T-cell (primary cell): ENCODE measurements at regions of chr1 and their contacts with region 1.

Region 1: DNA sequence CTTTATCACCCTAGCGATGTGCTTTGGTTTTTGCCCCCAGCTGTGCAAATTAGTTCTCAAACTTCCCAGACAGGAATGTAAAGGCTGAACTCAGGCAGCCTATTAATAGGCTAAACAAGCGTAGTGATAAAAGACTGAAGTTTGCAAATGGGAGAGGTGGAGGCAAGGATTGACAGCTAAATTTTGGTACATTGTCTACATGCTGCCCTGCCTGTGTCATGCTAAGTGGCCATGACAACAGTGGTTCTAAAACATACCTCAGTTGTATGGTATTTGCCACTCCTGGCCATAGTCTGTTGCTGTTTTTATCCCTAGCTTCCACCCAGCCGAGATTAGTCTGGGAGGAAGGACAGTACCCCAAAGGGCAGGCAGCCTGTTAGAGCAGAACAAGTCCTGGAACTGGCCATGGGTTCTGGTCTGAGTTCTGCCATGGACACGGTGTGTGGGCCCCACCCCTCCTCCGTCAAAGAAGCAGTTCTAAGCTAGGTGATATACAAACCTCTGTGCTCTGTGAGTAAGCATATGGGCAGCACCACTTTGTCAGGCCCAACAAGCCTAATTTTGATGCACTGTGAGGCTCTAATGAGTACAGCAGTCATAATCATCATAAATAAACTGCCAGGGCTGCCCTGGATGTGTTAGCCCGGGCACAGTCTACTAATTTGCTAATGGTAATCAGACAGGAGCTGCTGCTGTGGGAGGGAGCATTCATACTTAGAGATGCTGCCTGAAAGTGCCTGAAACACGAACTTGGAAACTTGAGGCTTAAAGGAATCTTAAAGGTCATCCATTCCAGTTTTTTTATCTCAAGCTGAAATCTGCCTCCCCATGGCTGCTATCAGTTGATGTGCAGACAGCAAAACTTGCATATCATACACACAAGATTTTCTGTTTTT is 177.1 kb downstream of the HHAT start:
- DNase-seq: no peak
- ATAC-seq: no peak
- H3K4me3 ChIP-seq: no peak overlapping the region
- H3K4me3 Mint-ChIP-seq: no peak overlapping the region
- H3K27ac ChIP-seq: no peak overlapping the region
- H3K27ac Mint-ChIP-seq: no peak overlapping the region
- H3K4me1 ChIP-seq: no peaks in the 10 kb centered on the region
- H3K4me1 Mint-ChIP-seq: no peaks in the 10 kb centered on the region
- H3K27me3 ChIP-seq: no peaks in the 10 kb centered on the region
- H3K27me3 Mint-ChIP-seq: no peaks in the 10 kb centered on the region

Region 2: DNA sequence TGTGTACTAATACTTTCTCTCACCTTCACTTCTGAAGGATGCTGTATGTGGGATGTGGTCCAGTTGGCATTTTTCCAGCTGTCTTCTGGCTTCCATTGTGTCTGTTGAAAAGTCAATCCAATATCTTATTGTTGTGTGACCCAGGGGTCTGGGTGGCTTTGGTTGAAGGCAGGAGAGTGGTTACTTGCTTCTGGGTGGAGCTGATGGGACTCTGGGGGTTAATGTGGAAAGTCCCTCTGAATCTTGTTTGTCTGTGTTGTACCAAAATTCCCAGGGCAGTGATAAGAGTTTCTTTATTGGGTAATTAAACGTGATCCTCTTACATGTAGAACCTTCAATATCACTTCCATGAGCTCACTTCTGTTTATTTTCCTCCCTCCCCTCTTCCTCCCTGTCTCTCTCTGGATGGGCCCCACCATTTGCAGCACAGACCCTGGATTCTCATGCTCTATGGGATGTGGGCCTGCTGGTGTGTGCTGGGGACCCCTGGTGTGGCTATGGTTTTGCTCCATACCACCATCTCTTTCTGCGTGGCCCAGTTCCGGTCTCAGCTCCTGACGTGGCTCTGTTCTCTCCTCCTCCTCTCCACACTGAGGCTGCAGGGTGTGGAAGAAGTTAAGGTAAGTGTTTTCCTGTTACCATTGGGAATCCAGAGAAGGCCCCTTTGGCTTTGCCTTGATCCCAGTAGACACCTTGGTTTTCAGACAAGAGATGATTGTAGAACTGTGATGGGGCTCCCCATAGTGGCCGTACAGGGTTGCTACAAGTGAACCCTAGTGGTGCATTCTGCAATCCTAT is 105.6 kb before region 1 on chr1:
- CTCF ChIA-PET with region 1: no interaction called
- POLR2A ChIA-PET with region 1: no interaction called
- DNase-seq: peak in 22 of 35 experiments; percentile 5 to 57 (median 21)
- ATAC-seq: peak; percentile 63 to 76 (median 69)
- H3K4me3 ChIP-seq: no peak overlapping the region
- H3K4me3 Mint-ChIP-seq: no peak overlapping the region
- H3K27ac ChIP-seq: no peak overlapping the region
- H3K27ac Mint-ChIP-seq: peak overlapping the region in 1 of 2 donors; percentile 75
- H3K4me1 ChIP-seq: peaks cover 0 to 7% of the 10 kb centered on the region in 2 experiments
- H3K4me1 Mint-ChIP-seq: peaks cover 16 to 32% (median 17%) of the 10 kb centered on the region in 3 donors
- H3K27me3 ChIP-seq: no peaks in the 10 kb centered on the region
- H3K27me3 Mint-ChIP-seq: no peaks in the 10 kb centered on the region

Region 3: GRCh38 chr1:210627755-210628154 is 121.9 kb after region 1 on chr1:
- CTCF ChIA-PET with region 1: interaction called in 1 of 2 experiments, 10 read pairs
- POLR2A ChIA-PET with region 1: no interaction called
- DNase-seq: no peak
- ATAC-seq: no peak
- H3K4me3 ChIP-seq: no peak overlapping the region
- H3K4me3 Mint-ChIP-seq: no peak overlapping the region
- H3K27ac ChIP-seq: no peak overlapping the region
- H3K27ac Mint-ChIP-seq: no peak overlapping the region
- H3K4me1 ChIP-seq: no peaks in the 10 kb centered on the region
- H3K4me1 Mint-ChIP-seq: no peaks in the 10 kb centered on the region
- H3K27me3 ChIP-seq: no peaks in the 10 kb centered on the region
- H3K27me3 Mint-ChIP-seq: no peaks in the 10 kb centered on the region

Region 4: DNA sequence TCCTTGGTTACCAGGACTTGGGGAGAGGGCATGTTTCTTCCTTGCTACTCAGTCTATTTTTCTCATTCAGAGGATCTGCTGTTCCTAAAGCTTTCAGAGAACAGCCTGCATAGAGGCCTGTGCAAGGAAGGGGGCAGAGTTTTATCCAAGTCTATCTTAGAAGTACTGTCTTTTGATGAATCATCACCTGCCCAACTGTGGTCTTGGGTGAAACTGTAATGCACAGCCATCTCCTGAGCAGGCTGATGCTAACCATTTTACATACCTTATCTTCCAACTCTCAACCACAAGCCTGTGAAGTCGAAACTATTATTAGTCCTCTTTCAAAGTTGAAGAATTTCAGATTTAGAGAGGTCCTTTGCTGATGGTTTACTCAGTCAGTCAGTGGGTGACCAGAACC is 190.9 kb after region 1 on chr1:
- CTCF ChIA-PET with region 1: no interaction called
- POLR2A ChIA-PET with region 1: no interaction called
- DNase-seq: no peak
- ATAC-seq: no peak
- H3K4me3 ChIP-seq: no peak overlapping the region
- H3K4me3 Mint-ChIP-seq: no peak overlapping the region
- H3K27ac ChIP-seq: no peak overlapping the region
- H3K27ac Mint-ChIP-seq: no peak overlapping the region
- H3K4me1 ChIP-seq: no peaks in the 10 kb centered on the region
- H3K4me1 Mint-ChIP-seq: peaks cover 9 to 19% (median 12%) of the 10 kb centered on the region in 3 donors
- H3K27me3 ChIP-seq: peaks cover 0 to 8% of the 10 kb centered on the region in 2 experiments
- H3K27me3 Mint-ChIP-seq: no peaks in the 10 kb centered on the region